ENCODE measurements at regions of chr20 and their contacts with region 1.

Region 1: GRCh38 chr20:51639206-51639832 is 96.8 kb upstream of the NFATC2 start:
- DNase-seq: peak; percentile 68 to 77 (median 74)
- ATAC-seq: peak; percentile 90
- H3K4me3 ChIP-seq: no peak overlapping the region
- H3K27ac ChIP-seq: no peak overlapping the region
- H3K4me1 ChIP-seq: peaks cover 0 to 4% of the 10 kb centered on the region in 2 experiments; a peak in 2 of 5 replicates
- H3K27me3 ChIP-seq: peaks cover 3 to 17% of the 10 kb centered on the region in 2 experiments; a peak in 3 of 5 replicates
- CTCF ChIP-seq: peak; percentile 78 to 94 (median 86)
- EP300 ChIP-seq: no peak
- POLR2A ChIP-seq: no peak
- RAD21 ChIP-seq: peak; percentile 72 to 83

Region 2: GRCh38 chr20:51703400-51704287 is 64.3 kb after region 1 on chr20:
- CTCF ChIA-PET with region 1: interaction called, 4 read pairs
- POLR2A ChIA-PET with region 1: no interaction called
- in situ Hi-C with region 1: no loop called
- intact Hi-C with region 1: loop called (anchors 5 kb)
- DNase-seq: no peak
- ATAC-seq: no peak
- H3K4me3 ChIP-seq: no peak overlapping the region
- H3K27ac ChIP-seq: no peak overlapping the region
- H3K4me1 ChIP-seq: no peaks in the 10 kb centered on the region
- H3K27me3 ChIP-seq: peaks cover 5 to 26% of the 10 kb centered on the region in 2 experiments; a peak in 4 of 5 replicates
- CTCF ChIP-seq: no peak
- EP300 ChIP-seq: no peak
- POLR2A ChIP-seq: no peak
- RAD21 ChIP-seq: no peak

Region 3: GRCh38 chr20:51966291-51966971 is 327.1 kb after region 1 on chr20:
- CTCF ChIA-PET with region 1: no interaction called
- POLR2A ChIA-PET with region 1: no interaction called
- in situ Hi-C with region 1: no loop called
- intact Hi-C with region 1: loop called (anchors 10 kb)
- DNase-seq: peak; percentile 15 to 53 (median 30)
- ATAC-seq: peak; percentile 88
- H3K4me3 ChIP-seq: no peak overlapping the region
- H3K27ac ChIP-seq: no peak overlapping the region
- H3K4me1 ChIP-seq: no peaks in the 10 kb centered on the region
- H3K27me3 ChIP-seq: peaks cover 6 to 7% of the 10 kb centered on the region in 2 experiments; a peak in 4 of 5 replicates
- CTCF ChIP-seq: peak; percentile 53 to 67 (median 64); a peak in 5 of 6 replicates
- EP300 ChIP-seq: no peak
- POLR2A ChIP-seq: no peak
- RAD21 ChIP-seq: peak in 1 of 2 experiments; percentile 46; a peak in 2 of 4 replicates

Region 4: DNA sequence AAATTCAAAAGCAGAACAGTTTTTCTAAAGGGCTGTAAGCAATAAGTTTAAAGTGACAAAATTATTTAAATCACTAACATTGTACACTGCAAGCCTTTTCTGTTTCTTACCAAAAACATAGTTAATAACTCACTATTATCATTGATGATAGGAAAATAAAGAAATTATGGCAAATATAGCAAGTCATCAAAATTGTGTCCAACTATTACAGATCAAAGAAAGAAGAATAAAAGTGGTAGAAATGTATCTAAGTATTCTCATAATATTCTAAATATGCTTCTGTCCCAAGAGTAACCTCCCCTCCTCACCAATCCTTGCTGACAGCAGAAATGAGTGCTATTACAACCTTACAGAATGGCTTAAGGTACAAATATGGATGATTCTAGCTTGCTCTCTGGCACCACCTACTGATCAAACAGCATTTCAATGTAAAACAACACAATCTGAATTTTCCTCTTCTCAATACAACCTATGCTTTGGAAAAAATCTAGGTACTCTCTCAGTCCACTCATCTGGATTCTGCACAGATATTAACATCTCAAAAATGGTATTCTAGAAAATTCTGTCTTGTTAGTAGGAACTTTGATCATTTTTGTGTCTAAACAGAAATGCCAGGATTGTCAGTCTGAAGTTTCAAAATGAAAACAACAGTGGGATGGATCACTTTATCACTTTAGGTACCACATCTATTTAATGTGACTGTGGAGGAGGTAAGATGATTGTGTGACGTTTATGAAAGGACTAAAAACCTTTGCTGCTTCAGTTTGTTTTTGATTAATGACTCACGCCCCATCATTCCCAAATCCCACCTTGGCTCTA is 511.3 kb after region 1 on chr20:
- CTCF ChIA-PET with region 1: no interaction called
- POLR2A ChIA-PET with region 1: no interaction called
- in situ Hi-C with region 1: no loop called
- intact Hi-C with region 1: loop called (anchors 2 kb)
- DNase-seq: peak; percentile 37 to 55 (median 39)
- ATAC-seq: peak; percentile 75
- H3K4me3 ChIP-seq: no peak overlapping the region
- H3K27ac ChIP-seq: no peak overlapping the region
- H3K4me1 ChIP-seq: no peaks in the 10 kb centered on the region; a peak in 1 of 5 replicates
- H3K27me3 ChIP-seq: no peaks in the 10 kb centered on the region
- CTCF ChIP-seq: peak; percentile 50 to 71 (median 67); a peak in 5 of 6 replicates
- EP300 ChIP-seq: no peak
- POLR2A ChIP-seq: no peak
- RAD21 ChIP-seq: peak; percentile 58 to 62

Measured in K562 (cell line).